ENCODE measurements at regions of chr11 and their contacts with region 1.

Region 1: DNA sequence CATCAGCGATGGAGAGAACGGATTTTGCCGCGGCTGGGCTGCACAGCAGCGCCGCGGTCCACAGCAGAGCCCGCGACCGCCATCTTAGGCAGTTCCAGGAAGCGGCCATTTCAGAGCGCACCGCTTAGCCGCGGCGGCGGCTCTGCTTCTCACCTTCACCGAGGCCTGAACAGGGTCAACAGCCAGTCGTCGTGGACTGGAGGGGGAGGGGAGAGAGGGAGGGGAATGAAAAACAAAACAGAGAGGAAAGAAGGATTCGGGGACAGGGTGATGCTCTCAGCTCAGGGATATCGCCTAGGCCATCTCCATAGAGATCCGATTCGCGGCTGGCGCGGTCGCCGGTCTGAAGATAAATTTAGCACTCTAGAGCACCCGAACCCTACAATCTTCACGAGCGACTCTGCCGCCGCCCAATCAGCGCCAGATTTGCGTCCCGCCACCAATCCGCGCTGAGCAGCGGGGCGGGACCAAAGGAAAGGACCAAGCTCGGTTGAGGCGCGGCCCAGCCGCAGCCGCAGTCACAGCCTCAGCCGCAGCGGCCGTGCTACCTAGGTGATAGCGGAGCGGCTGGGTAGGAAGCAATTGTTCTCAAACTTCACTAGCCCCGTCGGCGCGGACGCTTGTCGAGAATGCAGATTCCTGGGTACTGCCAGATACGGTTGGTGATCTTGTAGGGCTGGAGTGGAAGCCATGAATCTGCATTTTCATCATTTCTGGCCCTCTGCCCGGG is at the start of gene ZBED5:
- DNase-seq: peak; percentile 99
- total RNA-seq, gene ZBED5: 39.2 to 40.5 TPM

Region 2: DNA sequence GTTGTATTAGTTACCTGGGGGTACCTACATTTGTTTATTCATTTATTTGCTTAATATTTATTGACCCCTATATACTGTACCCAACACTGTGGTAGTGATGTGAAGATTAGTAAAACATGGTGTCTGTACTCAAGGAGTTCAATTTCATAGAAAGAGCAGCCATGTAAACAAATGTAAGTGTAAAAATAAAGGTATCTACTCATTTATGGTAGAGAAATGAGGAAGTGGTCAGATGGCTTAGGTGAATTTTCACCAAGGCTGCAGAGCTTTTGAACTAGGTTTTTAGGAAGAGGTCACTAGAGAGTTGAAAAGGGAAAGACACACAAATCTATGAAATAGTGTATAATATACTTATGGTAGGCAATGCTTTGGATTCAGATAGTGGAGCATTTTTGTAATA is 95.7 kb before region 1 on chr11:
- intact Hi-C with region 1: no loop called
- DNase-seq: no peak

Region 3: DNA sequence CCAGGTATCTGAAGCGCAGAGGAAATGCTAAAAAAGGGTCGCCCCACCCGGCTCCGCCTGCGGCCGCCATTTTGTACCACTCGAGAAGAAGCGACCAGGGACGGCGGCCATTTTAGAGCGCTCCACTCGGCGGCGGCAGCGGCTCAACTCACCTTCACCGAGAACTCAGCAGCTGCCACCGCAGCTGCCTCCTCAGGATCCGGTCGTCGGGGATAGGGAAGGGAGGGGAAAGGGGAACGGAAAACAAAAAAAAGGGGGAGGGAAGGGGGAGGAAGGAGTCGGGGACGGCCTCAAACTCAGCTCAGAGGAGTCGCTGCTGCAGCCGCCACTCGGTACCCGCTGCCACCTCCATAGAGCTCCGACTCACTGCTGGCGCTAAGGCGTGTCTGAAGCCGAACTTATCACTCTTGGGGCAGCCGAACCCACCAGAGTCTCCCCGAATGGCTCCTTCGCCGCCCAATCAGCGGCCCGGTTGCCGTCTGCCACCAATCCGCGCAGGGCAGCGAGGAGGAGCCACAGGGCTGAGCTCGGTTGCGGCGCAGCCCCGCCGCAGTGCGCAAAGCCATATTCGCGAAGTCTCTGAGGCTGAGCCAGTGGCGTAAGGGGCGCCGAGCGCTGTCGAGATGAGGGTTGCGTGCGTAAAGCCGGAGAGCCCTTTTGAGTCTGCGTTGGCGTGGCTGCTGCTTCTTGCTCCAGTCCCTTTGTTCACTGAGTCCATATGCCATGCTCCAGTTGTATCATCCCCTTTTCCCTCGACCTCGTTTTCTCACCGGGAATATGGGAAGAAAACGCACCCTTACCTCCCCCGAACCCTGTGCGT is 49.1 kb before region 1 on chr11 and contains the start of gene EIF4G2:
- intact Hi-C with region 1: loop called in 1 of 2 experiments (anchors 5 kb)
- DNase-seq: peak; percentile 99
- total RNA-seq, gene EIF4G2: 885 to 1,062 TPM

Region 4: GRCh38 chr11:10875430-10876021 is 17.7 kb after region 1 on chr11:
- intact Hi-C with region 1: no loop called
- DNase-seq: no peak

Region 5: GRCh38 chr11:10900681-10901415 is 43.0 kb after region 1 on chr11:
- intact Hi-C with region 1: loop called in 1 of 2 experiments (anchors 5 kb)
- DNase-seq: no peak

Measured in posterior vena cava (tissue), 2 donors.